Activated CD8-positive, alpha-beta memory T cell treated with anti-CD3 and anti-CD28 coated beads, Interleukin-2, amount 10 ng/mL, durations not matched to agents 7 days and 5 days (primary cell): ENCODE measurements at regions of chr5 and their contacts with region 1.

Region 1: GRCh38 chr5:15013654-15014463 is 142.3 kb upstream of the ANKH start:
- DNase-seq: no peak
- ATAC-seq: no peak
- H3K4me3 Mint-ChIP-seq: no peak overlapping the region
- H3K27ac Mint-ChIP-seq: no peak overlapping the region
- H3K4me1 Mint-ChIP-seq: no peaks in the 10 kb centered on the region
- H3K27me3 Mint-ChIP-seq: peaks cover 7% of the 10 kb centered on the region

Region 2: GRCh38 chr5:14727428-14727865 is 286.4 kb before region 1 on chr5:
- CTCF ChIA-PET with region 1: interaction called, 11 read pairs
- DNase-seq: peak; percentile 78
- ATAC-seq: peak; percentile 78
- H3K4me3 Mint-ChIP-seq: no peak overlapping the region
- H3K27ac Mint-ChIP-seq: no peak overlapping the region
- H3K4me1 Mint-ChIP-seq: peaks cover 4% of the 10 kb centered on the region
- H3K27me3 Mint-ChIP-seq: no peaks in the 10 kb centered on the region

Region 3: GRCh38 chr5:14946815-14947640 is 66.8 kb before region 1 on chr5:
- CTCF ChIA-PET with region 1: interaction called, 10 read pairs
- DNase-seq: no peak
- ATAC-seq: peak; percentile 85
- H3K4me3 Mint-ChIP-seq: no peak overlapping the region
- H3K27ac Mint-ChIP-seq: no peak overlapping the region
- H3K4me1 Mint-ChIP-seq: peaks cover 5% of the 10 kb centered on the region
- H3K27me3 Mint-ChIP-seq: peaks cover 11% of the 10 kb centered on the region